Naive thymus-derived CD4-positive, alpha-beta T cell (primary cell): ENCODE measurements at regions of chr13 and their contacts with region 1.

Region 1: GRCh38 chr13:46321494-46322225 is 65.4 kb downstream of the RUBCNL start:
- DNase-seq: peak; percentile 53 to 80 (median 75)
- ATAC-seq: peak; percentile 92
- H3K4me3 ChIP-seq: peak overlapping the region; percentile 39
- H3K4me3 Mint-ChIP-seq: peak overlapping the region; percentile 82 to 93 (median 86)
- H3K27ac ChIP-seq: peak overlapping the region; percentile 56
- H3K27ac Mint-ChIP-seq: peak overlapping the region; percentile 86 to 98 (median 95)
- H3K4me1 ChIP-seq: peaks cover 11 to 12% of the 10 kb centered on the region in 2 donors
- H3K4me1 Mint-ChIP-seq: peaks cover 23 to 48% (median 42%) of the 10 kb centered on the region in 7 donors
- H3K27me3 ChIP-seq: no peaks in the 10 kb centered on the region
- H3K27me3 Mint-ChIP-seq: no peaks in the 10 kb centered on the region

Region 2: GRCh38 chr13:45807520-45808099 is 514.0 kb before region 1 on chr13:
- CTCF ChIA-PET with region 1: interaction called, 4 read pairs
- POLR2A ChIA-PET with region 1: no interaction called
- intact Hi-C with region 1: loop called (anchors 1 to 2 kb)
- DNase-seq: peak in 3 of 9 donors; percentile 16 to 23 (median 20)
- ATAC-seq: peak; percentile 48
- H3K4me3 ChIP-seq: no peak overlapping the region
- H3K4me3 Mint-ChIP-seq: no peak overlapping the region
- H3K27ac ChIP-seq: no peak overlapping the region
- H3K27ac Mint-ChIP-seq: no peak overlapping the region
- H3K4me1 ChIP-seq: no peaks in the 10 kb centered on the region
- H3K4me1 Mint-ChIP-seq: peaks cover 0 to 12% (median 4%) of the 10 kb centered on the region in 7 donors
- H3K27me3 ChIP-seq: no peaks in the 10 kb centered on the region
- H3K27me3 Mint-ChIP-seq: no peaks in the 10 kb centered on the region

Region 3: DNA sequence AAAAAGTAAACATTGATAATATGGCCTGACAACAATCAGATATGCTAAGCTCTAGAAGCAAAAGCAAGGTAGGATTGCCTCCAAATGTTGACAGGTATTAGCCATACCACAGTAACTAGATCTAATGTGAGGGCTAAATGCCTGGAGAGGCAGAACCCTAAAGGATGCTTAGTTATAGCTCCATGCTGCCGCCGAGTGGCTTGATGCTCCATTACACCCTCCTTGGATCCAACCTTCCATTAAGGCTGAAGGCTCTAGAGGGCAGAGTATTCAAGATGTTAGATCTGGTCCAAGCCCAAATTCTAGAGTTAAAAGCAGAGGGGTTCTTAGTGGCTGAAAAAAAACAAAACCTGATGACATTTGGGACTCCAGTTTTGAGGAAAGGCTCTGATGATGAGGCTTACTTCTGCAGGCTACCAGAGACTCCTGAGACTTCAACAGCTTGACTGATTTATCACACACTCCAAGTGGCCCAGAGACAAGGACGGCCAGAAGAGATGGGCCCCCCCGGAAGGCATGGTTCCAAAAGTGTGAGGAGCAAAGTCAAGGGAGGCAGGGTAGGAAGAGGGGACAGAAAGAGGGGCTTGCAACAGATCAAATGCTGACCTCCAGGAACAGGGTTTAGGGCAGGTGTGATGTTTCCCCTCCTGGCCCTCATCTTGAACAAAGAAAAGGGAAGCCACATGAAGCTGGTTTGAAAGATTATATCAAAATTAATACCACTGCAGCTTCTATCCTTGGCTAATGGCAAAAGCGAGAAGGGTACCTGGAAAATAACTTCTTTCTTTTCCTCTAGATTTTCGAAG is 194.9 kb before region 1 on chr13:
- CTCF ChIA-PET with region 1: interaction called, 10 read pairs
- POLR2A ChIA-PET with region 1: interaction called, 7 read pairs
- intact Hi-C with region 1: loop called in 1 of 2 experiments (anchors 1 kb)
- DNase-seq: peak; percentile 44 to 74 (median 66)
- ATAC-seq: peak; percentile 94
- H3K4me3 ChIP-seq: no peak overlapping the region
- H3K4me3 Mint-ChIP-seq: peak overlapping the region in 3 of 10 donors; percentile 6 to 34 (median 8)
- H3K27ac ChIP-seq: peak overlapping the region; percentile 66
- H3K27ac Mint-ChIP-seq: peak overlapping the region; percentile 60 to 96 (median 87)
- H3K4me1 ChIP-seq: peaks cover 11 to 31% of the 10 kb centered on the region in 2 donors
- H3K4me1 Mint-ChIP-seq: peaks cover 35 to 54% (median 49%) of the 10 kb centered on the region in 7 donors
- H3K27me3 ChIP-seq: no peaks in the 10 kb centered on the region
- H3K27me3 Mint-ChIP-seq: peaks cover 0 to 2% (median 0%) of the 10 kb centered on the region in 5 donors

Region 4: DNA sequence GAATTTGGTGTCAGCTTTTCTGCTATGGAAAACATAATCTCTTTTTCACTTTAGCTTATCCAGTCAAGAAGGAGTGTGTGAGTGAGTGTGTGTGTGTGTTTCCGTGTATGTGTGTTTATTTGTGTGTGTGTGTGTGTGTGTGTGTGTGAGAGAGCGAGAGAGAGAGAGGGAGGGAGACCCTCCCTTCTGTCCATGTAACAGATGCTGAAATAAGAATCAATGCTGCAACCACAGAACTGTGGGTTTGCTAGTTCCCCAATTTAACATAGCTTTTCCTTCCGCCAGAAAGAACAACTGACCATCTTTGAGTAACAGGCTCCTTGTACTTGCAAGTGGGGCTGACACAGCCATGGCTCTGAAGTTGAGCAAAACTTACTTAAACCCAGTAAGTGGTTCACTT is 144.9 kb before region 1 on chr13:
- CTCF ChIA-PET with region 1: interaction called, 10 read pairs
- POLR2A ChIA-PET with region 1: interaction called, 4 read pairs
- intact Hi-C with region 1: no loop called
- DNase-seq: no peak
- ATAC-seq: peak; percentile 41
- H3K4me3 ChIP-seq: peak overlapping the region; percentile 66
- H3K4me3 Mint-ChIP-seq: peak overlapping the region; percentile 80 to 99 (median 92)
- H3K27ac ChIP-seq: peak overlapping the region; percentile 82
- H3K27ac Mint-ChIP-seq: peak overlapping the region; percentile 73 to 95 (median 89)
- H3K4me1 ChIP-seq: peaks cover 59 to 60% of the 10 kb centered on the region in 2 donors
- H3K4me1 Mint-ChIP-seq: peaks cover 64 to 81% (median 72%) of the 10 kb centered on the region in 7 donors
- H3K27me3 ChIP-seq: no peaks in the 10 kb centered on the region
- H3K27me3 Mint-ChIP-seq: peaks cover 0 to 3% (median 0%) of the 10 kb centered on the region in 5 donors

Region 5: DNA sequence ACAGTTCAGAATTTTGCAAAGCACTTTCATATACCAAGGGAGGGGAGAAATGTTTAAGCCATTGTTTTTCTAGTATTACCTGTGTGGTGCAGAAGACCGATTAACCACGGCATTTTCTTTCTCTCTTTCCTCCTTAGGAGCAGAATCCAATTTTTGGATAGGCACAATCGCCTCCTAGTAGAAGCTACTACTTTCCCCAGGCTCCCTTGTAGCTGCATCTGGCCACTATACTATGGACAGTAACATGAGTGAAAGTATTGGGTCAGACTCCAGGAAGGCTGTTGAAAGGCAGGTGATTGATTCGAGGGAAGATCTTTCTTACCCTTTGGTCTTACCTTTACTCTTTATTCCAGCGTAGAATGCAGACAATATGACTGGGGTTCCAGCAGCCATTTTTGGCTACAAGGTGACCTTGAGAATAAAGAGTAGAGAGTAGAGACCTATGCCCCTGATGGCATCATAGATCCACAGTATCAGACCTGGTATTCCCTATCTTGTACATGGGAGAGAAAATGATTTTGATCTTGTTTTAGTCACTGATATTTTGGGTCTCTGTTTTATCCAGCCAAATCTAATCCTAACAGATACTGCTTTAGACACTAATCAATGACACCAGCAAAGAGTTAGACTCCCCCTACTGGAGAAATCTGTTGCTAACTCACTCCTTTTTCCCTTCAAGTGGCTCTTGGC is 32.9 kb before region 1 on chr13:
- CTCF ChIA-PET with region 1: interaction called, 108 read pairs
- POLR2A ChIA-PET with region 1: interaction called, 9 read pairs
- intact Hi-C with region 1: loop called (anchors 1 kb)
- DNase-seq: peak in 7 of 9 donors; percentile 46 to 75 (median 70)
- ATAC-seq: peak; percentile 84
- H3K4me3 ChIP-seq: no peak overlapping the region
- H3K4me3 Mint-ChIP-seq: no peak overlapping the region
- H3K27ac ChIP-seq: no peak overlapping the region
- H3K27ac Mint-ChIP-seq: peak overlapping the region in 3 of 9 donors; percentile 8 to 18 (median 16)
- H3K4me1 ChIP-seq: peaks cover 0 to 17% of the 10 kb centered on the region in 2 donors
- H3K4me1 Mint-ChIP-seq: peaks cover 4 to 29% (median 15%) of the 10 kb centered on the region in 7 donors
- H3K27me3 ChIP-seq: no peaks in the 10 kb centered on the region
- H3K27me3 Mint-ChIP-seq: no peaks in the 10 kb centered on the region

Region 6: DNA sequence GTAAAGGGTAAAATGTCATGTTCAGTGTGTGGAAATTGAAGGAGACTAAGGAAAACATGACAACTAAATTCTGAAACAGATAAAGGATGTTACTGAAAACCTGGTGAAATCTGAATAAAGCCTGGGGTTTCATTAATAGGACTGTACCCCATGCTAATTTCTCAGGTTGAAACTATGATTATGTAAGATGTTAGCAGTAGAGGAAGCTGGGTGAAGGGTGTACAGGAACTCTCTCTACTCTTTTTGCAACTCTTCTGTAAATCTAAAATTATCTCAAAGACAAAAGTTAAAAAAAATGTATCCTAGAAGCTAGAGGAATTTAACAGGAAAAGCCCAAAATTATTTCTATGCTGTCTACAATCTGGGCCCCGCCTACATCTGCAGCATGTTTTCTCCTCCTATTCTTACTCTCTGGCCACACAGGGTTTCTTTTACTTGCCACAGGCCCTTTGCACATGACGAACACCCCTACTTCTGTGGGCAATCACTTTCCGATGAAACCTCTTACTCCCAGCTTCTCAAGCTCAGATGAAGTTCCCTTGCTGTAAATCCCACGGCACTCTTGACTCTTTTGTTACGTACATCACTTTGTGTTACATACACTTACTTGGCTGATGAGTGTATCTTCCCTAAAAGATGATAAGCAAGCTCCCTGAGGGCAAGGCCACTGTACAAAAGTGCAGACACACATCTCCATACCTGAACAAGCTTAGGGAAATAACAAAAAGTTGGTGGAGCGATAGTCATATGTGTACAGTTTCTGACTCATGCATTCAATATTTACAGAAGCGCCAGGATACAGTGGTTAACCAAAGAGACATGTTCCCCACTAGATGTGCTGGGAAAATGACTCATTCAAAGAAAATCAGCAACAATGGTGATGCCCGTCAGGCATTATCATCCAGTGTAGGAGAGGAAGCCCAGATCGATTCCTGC is 32.8 kb after region 1 on chr13:
- CTCF ChIA-PET with region 1: no interaction called
- POLR2A ChIA-PET with region 1: no interaction called
- intact Hi-C with region 1: no loop called
- DNase-seq: peak in 1 of 9 donors; percentile 30
- ATAC-seq: peak; percentile 85
- H3K4me3 ChIP-seq: no peak overlapping the region
- H3K4me3 Mint-ChIP-seq: peak overlapping the region in 1 of 10 donors; percentile 18
- H3K27ac ChIP-seq: no peak overlapping the region
- H3K27ac Mint-ChIP-seq: peak overlapping the region in 4 of 9 donors; percentile 11 to 86 (median 77)
- H3K4me1 ChIP-seq: no peaks in the 10 kb centered on the region
- H3K4me1 Mint-ChIP-seq: peaks cover 5 to 7% (median 6%) of the 10 kb centered on the region in 7 donors
- H3K27me3 ChIP-seq: no peaks in the 10 kb centered on the region
- H3K27me3 Mint-ChIP-seq: no peaks in the 10 kb centered on the region